ENCODE measurements at regions of chr17 and their contacts with region 1.

Region 1: GRCh38 chr17:49146620-49147306 is 14.2 kb downstream of the B4GALNT2 start:
- DNase-seq: peak; percentile 97
- H3K4me3 ChIP-seq: no peak overlapping the region
- H3K27ac ChIP-seq: peak overlapping the region; percentile 67
- H3K4me1 ChIP-seq: peaks cover 13% of the 10 kb centered on the region
- H3K27me3 ChIP-seq: no peaks in the 10 kb centered on the region
- CTCF ChIP-seq: no peak

Region 2: GRCh38 chr17:48625495-48626244 is 521.1 kb before region 1 on chr17:
- CTCF ChIA-PET with region 1: no interaction called
- dilution Hi-C with region 1: no loop called
- in situ Hi-C with region 1: no loop called
- intact Hi-C with region 1: no loop called
- DNase-seq: peak; percentile 56
- H3K4me3 ChIP-seq: peak overlapping the region; percentile 35 to 43 (median 37)
- H3K27ac ChIP-seq: no peak overlapping the region
- H3K4me1 ChIP-seq: peaks cover 14% of the 10 kb centered on the region
- H3K27me3 ChIP-seq: peaks cover 81% of the 10 kb centered on the region
- CTCF ChIP-seq: no peak

Region 3: DNA sequence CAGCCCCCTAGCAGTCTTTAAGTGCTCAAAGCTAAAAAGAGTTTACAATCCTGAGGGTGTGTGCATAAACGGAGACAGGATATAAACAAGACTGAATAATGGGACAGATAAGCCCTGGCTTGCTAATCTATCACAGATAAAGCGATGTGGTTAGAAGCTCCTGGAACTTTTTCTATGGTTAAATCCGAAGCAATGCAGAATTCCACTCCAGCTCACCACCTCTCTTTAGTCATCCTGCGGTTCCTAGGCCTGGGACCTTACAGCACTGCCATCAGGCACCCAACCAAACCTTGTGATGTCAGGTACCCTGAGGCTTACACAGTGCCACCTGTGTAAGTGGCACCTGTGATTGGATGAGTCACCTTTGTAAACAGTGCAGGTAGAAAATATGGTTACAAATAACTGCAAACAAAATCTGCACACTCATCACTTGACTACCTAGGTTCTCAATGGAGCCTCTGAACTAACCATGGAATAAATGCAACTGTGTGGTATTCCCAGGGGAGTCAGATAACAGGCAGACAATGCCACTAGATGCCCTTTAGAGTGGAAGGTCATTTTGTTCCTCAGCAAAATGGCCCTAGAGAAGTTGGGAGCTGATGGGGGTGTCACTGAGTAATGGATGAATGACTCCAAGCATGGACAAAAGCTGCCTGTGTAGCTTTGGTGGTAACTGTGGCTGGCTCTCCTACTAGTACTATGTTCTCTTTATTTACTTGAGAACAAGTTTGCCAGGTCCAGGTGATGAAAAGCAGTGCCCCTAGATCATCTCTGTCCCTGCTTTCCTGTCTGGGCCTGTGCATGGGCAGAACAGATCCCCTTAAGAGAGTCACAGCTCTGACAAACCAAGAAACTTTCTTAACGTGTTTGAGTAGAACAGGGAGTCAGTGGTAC is 45.5 kb before region 1 on chr17:
- CTCF ChIA-PET with region 1: no interaction called
- dilution Hi-C with region 1: no loop called
- in situ Hi-C with region 1: no loop called
- intact Hi-C with region 1: loop called (anchors 1 kb)
- DNase-seq: peak; percentile 94
- H3K4me3 ChIP-seq: no peak overlapping the region
- H3K27ac ChIP-seq: peak overlapping the region; percentile 79
- H3K4me1 ChIP-seq: peaks cover 24% of the 10 kb centered on the region
- H3K27me3 ChIP-seq: no peaks in the 10 kb centered on the region
- CTCF ChIP-seq: no peak

Region 4: GRCh38 chr17:49110509-49110908 is 36.3 kb before region 1 on chr17:
- CTCF ChIA-PET with region 1: no interaction called
- dilution Hi-C with region 1: no loop called
- in situ Hi-C with region 1: no loop called
- intact Hi-C with region 1: loop called (anchors 1 kb)
- DNase-seq: peak; percentile 99
- H3K4me3 ChIP-seq: no peak overlapping the region
- H3K27ac ChIP-seq: peak overlapping the region; percentile 82
- H3K4me1 ChIP-seq: peaks cover 45% of the 10 kb centered on the region
- H3K27me3 ChIP-seq: no peaks in the 10 kb centered on the region
- CTCF ChIP-seq: no peak

Region 5: GRCh38 chr17:49353607-49354006 is 206.8 kb after region 1 on chr17:
- CTCF ChIA-PET with region 1: no interaction called
- dilution Hi-C with region 1: no loop called
- in situ Hi-C with region 1: no loop called
- intact Hi-C with region 1: no loop called
- DNase-seq: no peak
- H3K4me3 ChIP-seq: no peak overlapping the region
- H3K27ac ChIP-seq: no peak overlapping the region
- H3K4me1 ChIP-seq: no peaks in the 10 kb centered on the region
- H3K27me3 ChIP-seq: no peaks in the 10 kb centered on the region
- CTCF ChIP-seq: no peak

Region 6: GRCh38 chr17:49779739-49780231 is 633.0 kb after region 1 on chr17:
- CTCF ChIA-PET with region 1: no interaction called
- dilution Hi-C with region 1: no loop called
- in situ Hi-C with region 1: no loop called
- intact Hi-C with region 1: no loop called
- DNase-seq: peak; percentile 81
- H3K4me3 ChIP-seq: no peak overlapping the region
- H3K27ac ChIP-seq: no peak overlapping the region
- H3K4me1 ChIP-seq: peaks cover 15% of the 10 kb centered on the region
- H3K27me3 ChIP-seq: no peaks in the 10 kb centered on the region
- CTCF ChIP-seq: peak; percentile 53 to 78

Measured in mammary epithelial cell (primary cell).